ENCODE measurements at regions of chr9 and their contacts with region 1.

Region 1: GRCh38 chr9:76441551-76442322 is 17.2 kb upstream of the GCNT1 start:
- DNase-seq: no peak
- H3K4me3 Mint-ChIP-seq: peak overlapping the region; percentile 89
- H3K27ac Mint-ChIP-seq: peak overlapping the region; percentile 98
- H3K4me1 Mint-ChIP-seq: peaks cover 68% of the 10 kb centered on the region
- H3K27me3 Mint-ChIP-seq: no peaks in the 10 kb centered on the region

Region 2: GRCh38 chr9:75088260-75088905 is 1353.4 kb before region 1 on chr9 and contains the start of gene OSTF1:
- intact Hi-C with region 1: loop called (anchors 2 kb)
- DNase-seq: peak; percentile 95
- H3K4me3 Mint-ChIP-seq: peak within 1 kb of the TSS; percentile 99
- H3K27ac Mint-ChIP-seq: peak within 1 kb of the TSS; percentile 97
- H3K4me1 Mint-ChIP-seq: peaks cover 64% of the 10 kb centered on the region
- H3K27me3 Mint-ChIP-seq: no peaks in the 10 kb centered on the region
- total RNA-seq, gene OSTF1: 49.5 and 53.6 TPM in 2 replicates

Region 3: GRCh38 chr9:76181020-76181641 is 260.6 kb before region 1 on chr9:
- intact Hi-C with region 1: loop called (anchors 5 kb)
- DNase-seq: peak; percentile 9
- H3K4me3 Mint-ChIP-seq: no peak overlapping the region
- H3K27ac Mint-ChIP-seq: peak overlapping the region; percentile 65
- H3K4me1 Mint-ChIP-seq: peaks cover 57% of the 10 kb centered on the region
- H3K27me3 Mint-ChIP-seq: no peaks in the 10 kb centered on the region

Region 4: GRCh38 chr9:76423216-76424177 is 18.2 kb before region 1 on chr9:
- intact Hi-C with region 1: loop called (anchors 1 kb)
- DNase-seq: no peak
- H3K4me3 Mint-ChIP-seq: peak overlapping the region; percentile 28
- H3K27ac Mint-ChIP-seq: peak overlapping the region; percentile 77
- H3K4me1 Mint-ChIP-seq: peaks cover 17% of the 10 kb centered on the region
- H3K27me3 Mint-ChIP-seq: no peaks in the 10 kb centered on the region

Region 5: DNA sequence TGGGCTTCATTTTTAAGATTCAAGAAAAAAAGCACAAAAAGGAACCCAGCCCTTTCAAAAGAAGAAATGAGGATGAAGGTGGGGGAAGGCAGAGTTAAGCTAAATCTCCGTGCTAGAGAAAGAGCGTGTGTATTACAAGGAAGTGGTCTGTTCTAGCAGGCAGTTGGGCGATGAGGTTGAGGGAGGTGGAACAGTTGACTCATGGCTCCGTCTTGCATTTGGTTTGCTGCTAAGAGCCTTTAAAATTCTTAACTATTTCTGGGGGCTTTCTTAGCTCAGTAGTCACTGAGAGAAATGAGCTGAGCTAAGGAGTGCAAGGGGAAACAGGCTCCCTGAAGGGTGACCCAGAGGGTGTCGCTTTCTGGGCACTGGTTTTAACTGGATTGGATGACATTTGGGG is 134.6 kb after region 1 on chr9:
- intact Hi-C with region 1: loop called (anchors 2 kb)
- DNase-seq: peak; percentile 59
- H3K4me3 Mint-ChIP-seq: peak overlapping the region; percentile 25
- H3K27ac Mint-ChIP-seq: peak overlapping the region; percentile 89
- H3K4me1 Mint-ChIP-seq: peaks cover 34% of the 10 kb centered on the region
- H3K27me3 Mint-ChIP-seq: peaks cover 1% of the 10 kb centered on the region

Region 6: DNA sequence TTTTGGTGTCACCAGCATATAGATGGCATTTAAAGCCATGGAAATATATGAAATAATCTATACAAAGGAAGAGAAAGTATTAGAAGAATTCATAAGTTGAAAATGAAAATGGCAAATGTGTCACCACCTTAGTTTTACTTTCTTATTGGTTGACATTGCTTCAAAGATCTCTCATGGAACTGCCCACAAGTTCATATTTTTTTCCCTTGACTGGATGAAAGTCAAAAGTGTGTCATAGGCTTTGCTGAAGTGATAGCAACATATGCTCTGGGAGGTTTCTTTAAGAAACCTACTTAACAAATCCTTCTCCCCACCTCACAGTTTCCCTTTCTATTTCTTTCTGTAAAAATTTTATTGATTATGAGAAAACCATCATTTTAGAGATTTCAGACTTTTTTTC is 862.8 kb after region 1 on chr9:
- intact Hi-C with region 1: loop called (anchors 5 kb)
- DNase-seq: no peak
- H3K4me3 Mint-ChIP-seq: no peak overlapping the region
- H3K27ac Mint-ChIP-seq: no peak overlapping the region
- H3K4me1 Mint-ChIP-seq: peaks cover 12% of the 10 kb centered on the region
- H3K27me3 Mint-ChIP-seq: no peaks in the 10 kb centered on the region

Measured in activated T-helper 1 cell treated with anti-CD3 and anti-CD28 coated beads, Interleukin-12 subunit alpha, Interleukin-12 subunit beta, Interleukin-2, Interleukin-4 antibody, amounts not matched to agents 30 ng/mL and 10 ng/mL and 1 ng/mL, durations not matched to agents 14 hours and 24 hours and 36 hours (primary cell).